Endothelial cell of umbilical vein (primary cell): ENCODE measurements at regions of chr6 and their contacts with region 1.

Region 1: DNA sequence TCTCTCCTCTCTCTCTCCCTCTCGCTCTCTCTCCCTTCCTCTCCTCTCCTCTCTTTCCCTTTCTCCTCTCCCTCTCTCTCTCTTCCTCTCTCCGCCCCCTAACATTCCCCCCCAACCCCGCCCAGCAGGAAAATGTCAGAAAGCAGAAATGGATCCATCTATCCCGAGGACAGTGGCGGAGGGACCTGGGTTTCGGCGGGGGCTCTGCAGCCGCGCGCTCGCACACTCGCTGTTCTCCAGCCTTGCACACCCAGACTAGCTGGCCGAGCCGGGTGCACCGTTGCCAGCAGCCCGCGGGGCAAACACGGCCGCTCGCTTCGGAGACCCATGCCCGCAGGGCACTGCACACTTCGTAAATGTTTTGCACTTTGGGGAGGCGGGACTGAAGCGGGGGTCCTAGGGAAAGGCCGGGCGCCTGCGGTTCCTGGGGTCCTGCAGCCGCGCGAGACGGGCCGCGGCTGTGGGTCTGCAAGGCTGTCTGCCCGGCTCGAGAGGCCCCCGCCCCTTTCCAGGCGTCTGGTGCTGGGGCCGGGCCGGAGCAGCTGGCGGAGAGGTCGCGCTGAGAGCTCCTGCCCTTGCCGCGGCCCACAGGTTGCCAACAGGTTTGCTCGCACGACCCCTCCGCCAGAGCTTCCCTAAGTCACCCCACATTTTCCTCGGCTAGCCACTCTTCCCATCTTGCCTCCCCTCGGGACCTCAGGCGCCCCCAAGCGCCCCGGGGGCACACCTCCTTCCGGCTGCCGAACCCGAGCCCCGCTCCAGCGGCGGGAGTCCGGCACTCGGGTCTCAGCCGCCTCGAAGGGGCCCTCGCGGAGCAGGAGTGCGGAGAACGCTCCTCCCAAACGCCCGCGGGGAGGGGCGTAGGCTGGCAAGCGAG is 816 bp upstream of the MDGA1 start:
- DNase-seq: peak; percentile 53
- H3K4me3 ChIP-seq: peak overlapping the region; percentile 55 to 85 (median 77)
- H3K27ac ChIP-seq: no peak overlapping the region
- H3K4me1 ChIP-seq: peaks cover 16% of the 10 kb centered on the region
- H3K27me3 ChIP-seq: peaks cover 33 to 50% of the 10 kb centered on the region in 2 experiments
- CTCF ChIP-seq: no peak
- POLR2A ChIP-seq: no peak

Region 2: DNA sequence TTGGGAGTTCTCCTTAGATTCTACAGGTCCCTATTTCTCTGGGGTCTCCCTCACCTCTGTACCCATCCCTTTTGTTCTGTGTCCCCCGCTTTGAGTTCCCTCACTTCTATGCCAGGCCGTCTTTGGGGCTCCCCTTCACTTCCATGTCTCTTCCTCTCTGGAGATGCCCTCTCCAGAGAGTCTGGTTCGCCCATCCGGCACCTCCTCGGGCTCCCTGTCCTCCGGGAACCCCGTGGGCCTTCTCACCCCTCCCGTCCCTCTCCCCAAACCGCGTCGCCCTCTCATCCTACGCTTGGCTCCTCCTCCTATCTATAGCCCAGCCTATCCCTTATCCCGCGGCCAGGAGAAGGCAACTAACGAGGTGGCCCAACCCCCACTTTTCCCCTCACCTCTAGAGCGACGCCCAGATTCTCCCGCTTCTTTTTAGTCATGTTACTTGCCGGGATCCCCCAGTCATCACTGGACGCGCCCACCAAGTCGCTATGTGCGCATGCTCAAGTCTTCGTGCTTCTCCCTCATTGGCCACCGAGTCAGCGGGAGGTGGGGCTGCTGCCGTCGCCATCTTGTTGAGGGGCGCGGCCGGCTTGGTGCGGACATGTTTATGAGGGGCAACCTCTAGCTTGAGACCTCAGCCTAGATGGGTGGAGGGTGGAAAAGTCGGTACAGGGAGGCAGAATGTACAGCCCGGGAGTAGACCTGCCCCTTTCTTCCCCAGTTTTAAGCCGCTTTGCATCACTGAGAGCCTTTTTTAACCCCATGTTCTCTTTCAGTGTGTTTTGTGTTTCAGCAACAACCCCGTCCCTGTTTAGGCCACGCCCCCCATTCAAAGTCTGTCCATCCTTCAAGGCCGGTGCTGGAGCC is 198.8 kb before region 1 on chr6 and contains the start of gene CCDC167:
- CTCF ChIA-PET with region 1: no interaction called
- POLR2A ChIA-PET with region 1: interaction called, 14 read pairs
- dilution Hi-C with region 1: no loop called
- intact Hi-C with region 1: no loop called
- DNase-seq: peak; percentile 99
- H3K4me3 ChIP-seq: peak within 1 kb of the TSS; percentile 59 to 83 (median 74)
- H3K27ac ChIP-seq: peak within 1 kb of the TSS; percentile 62
- H3K4me1 ChIP-seq: peaks cover 7% of the 10 kb centered on the region
- H3K27me3 ChIP-seq: peaks cover 6 to 11% of the 10 kb centered on the region in 2 experiments
- CTCF ChIP-seq: no peak
- POLR2A ChIP-seq: no peak
- total RNA-seq, gene CCDC167: 46.6 and 52.7 TPM in 2 replicates

Region 3: DNA sequence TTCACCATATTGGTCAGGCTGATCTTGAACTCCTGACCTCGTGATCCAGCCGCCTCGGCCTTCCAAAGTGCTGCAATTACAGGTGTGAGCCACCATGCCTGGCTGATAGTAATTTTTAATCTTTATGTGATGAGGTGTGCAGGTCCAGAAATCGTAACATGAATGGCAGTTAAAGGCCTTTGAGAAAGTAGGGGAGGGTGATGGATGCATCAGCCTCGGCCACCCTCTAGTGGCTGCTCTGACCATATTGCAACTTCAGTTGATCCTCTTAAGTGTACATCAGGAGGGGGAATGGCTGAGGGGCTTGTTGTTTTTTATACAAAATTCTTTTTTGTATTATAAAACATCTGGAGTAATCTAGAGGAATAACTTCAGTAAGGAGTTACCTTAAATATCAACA is 314.1 kb after region 1 on chr6:
- CTCF ChIA-PET with region 1: no interaction called
- POLR2A ChIA-PET with region 1: no interaction called
- dilution Hi-C with region 1: no loop called
- intact Hi-C with region 1: loop called (anchors 2 kb)
- DNase-seq: peak; percentile 55
- H3K4me3 ChIP-seq: no peak overlapping the region
- H3K27ac ChIP-seq: no peak overlapping the region
- H3K4me1 ChIP-seq: no peaks in the 10 kb centered on the region
- H3K27me3 ChIP-seq: no peaks in the 10 kb centered on the region
- CTCF ChIP-seq: peak; percentile 56 to 70
- POLR2A ChIP-seq: no peak